Breast epithelium (tissue), 4 donors: ENCODE measurements at regions of chr6 and their contacts with region 1.

Region 1: GRCh38 chr6:45896783-45897441 is 118.7 kb downstream of the CLIC5 start:
- DNase-seq: no peak
- H3K4me3 ChIP-seq: no peak overlapping the region
- H3K27ac ChIP-seq: peak overlapping the region in 1 of 2 donors; percentile 52
- H3K4me1 ChIP-seq: no peaks in the 10 kb centered on the region
- H3K27me3 ChIP-seq: no peaks in the 10 kb centered on the region
- CTCF ChIP-seq: no peak
- POLR2A ChIP-seq: no peak

Region 2: DNA sequence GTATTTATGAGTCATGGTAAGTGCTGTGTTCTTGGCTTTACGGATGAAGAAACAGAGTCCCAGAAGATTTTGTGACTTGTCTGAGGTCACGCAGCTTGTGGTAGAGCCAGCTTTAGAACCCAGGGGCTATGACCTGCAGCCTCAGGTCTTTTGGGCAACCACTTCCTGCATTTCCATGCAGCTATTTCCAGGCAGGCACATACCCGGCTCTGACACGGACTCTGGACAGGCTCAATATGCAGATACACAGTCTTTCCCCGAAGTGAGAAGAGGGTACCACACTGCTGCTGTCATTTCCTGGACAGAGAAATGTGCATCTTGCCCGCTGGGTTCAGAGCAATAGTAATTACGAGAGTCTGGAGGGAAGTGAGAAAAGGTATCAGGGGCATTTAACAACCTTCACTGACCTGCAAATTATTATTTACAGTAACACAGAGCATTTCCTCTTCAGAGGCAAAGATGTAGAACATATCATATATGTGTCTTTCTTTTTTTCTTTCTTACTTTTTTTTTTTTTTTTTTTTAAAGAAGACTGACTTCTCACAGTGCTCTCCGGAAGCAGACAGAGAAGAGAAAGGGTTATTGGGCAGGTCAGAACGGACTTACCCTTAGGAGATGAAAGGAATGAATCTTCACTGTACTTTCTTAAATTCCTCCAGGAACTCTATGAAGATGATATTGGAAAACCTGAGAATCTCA is 66.3 kb before region 1 on chr6:
- intact Hi-C with region 1: no loop called
- DNase-seq: no peak
- H3K4me3 ChIP-seq: peak overlapping the region in 2 of 3 donors; percentile 13 to 23
- H3K27ac ChIP-seq: no peak overlapping the region
- H3K4me1 ChIP-seq: no peaks in the 10 kb centered on the region
- H3K27me3 ChIP-seq: no peaks in the 10 kb centered on the region
- CTCF ChIP-seq: no peak
- POLR2A ChIP-seq: no peak

Region 3: DNA sequence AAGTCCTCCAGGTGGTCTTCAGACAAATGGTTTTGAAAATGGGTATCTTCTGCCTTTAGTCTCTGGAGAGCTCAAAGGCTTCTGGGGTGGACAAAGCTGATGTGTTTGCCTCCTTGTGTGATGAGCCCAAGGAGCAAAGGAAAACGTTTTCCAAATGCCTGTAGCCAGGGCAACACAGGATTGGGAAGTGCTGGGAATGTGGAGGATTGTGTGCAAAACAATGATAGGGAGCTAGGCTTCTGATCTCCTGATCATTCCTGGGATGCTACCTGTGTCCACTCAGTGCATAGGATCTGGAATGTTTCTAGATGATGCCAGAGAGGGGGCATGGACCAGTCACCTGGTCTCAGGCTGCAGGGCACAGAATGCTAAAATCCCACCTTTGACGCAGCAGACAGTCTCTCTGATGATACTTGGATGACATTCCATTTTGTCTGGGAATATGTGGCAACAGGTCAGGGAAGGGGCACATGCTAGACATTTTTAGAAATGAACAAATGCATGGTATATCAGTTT is 10.2 kb before region 1 on chr6:
- intact Hi-C with region 1: loop called (anchors 1 kb)
- DNase-seq: no peak
- H3K4me3 ChIP-seq: no peak overlapping the region
- H3K27ac ChIP-seq: no peak overlapping the region
- H3K4me1 ChIP-seq: no peaks in the 10 kb centered on the region
- H3K27me3 ChIP-seq: no peaks in the 10 kb centered on the region
- CTCF ChIP-seq: no peak
- POLR2A ChIP-seq: no peak